ENCODE measurements at regions of chr5 and their contacts with region 1.

Region 1: GRCh38 chr5:96601811-96602244 is 60.3 kb upstream of the CAST start:
- DNase-seq: peak; percentile 80
- H3K27ac ChIP-seq: no peak overlapping the region
- CTCF ChIP-seq: peak; percentile 95

Region 2: GRCh38 chr5:96344678-96345577 is 256.9 kb before region 1 on chr5:
- CTCF ChIA-PET with region 1: interaction called, 24 read pairs
- POLR2A ChIA-PET with region 1: no interaction called
- DNase-seq: peak; percentile 73
- H3K27ac ChIP-seq: no peak overlapping the region
- CTCF ChIP-seq: peak; percentile 74

Region 3: DNA sequence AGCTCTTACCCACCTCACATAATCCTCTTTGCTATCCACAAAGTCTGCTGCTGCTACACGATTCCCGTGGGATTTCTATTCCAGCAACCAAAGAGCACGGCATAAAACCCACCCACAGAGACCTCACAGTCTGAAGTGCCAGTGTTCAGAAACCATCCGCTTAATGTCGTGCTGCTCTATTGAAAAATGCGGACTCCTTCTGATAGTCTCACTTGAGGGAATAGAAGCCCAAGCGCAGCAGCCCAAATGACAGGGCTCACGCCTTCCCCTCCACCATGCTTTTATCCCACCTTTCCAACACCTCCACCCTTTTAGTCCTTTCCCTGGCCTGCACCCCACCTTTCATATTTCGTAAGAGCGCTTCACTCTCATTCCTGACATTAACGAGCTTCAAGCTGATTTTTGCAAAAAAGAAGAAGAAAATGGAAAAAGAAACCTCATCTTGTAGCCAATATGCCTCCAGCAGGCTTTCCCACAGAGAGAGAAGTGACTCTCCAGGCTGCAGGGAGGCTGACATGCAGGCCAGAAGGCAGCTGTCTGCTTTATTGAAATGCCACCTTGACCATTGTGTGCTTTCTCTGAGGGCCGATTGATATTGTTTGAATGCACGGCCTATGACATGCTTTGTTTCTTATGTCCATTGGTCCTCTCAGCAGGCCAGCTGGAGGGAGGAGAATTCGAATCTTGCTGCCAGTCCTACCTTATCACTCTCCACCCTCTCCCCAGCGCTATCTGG is 98.2 kb before region 1 on chr5:
- CTCF ChIA-PET with region 1: no interaction called
- POLR2A ChIA-PET with region 1: no interaction called
- DNase-seq: no peak
- H3K27ac ChIP-seq: no peak overlapping the region
- CTCF ChIP-seq: no peak

Measured in RWPE1 (cell line).